HCT116 (cell line): ENCODE measurements at regions of chr5 and their contacts with region 1.

Region 1: GRCh38 chr5:168987543-168988300 is 313.2 kb downstream of the SLIT3 start:
- DNase-seq: peak; percentile 32
- ATAC-seq: peak; percentile 88
- H3K4me3 ChIP-seq: no peak overlapping the region
- H3K27ac ChIP-seq: no peak overlapping the region
- H3K4me1 ChIP-seq: no peaks in the 10 kb centered on the region
- H3K27me3 ChIP-seq: peaks cover 54% of the 10 kb centered on the region
- CTCF ChIP-seq: peak; percentile 79 to 92 (median 86)
- POLR2A ChIP-seq: no peak
- RAD21 ChIP-seq: peak; percentile 92

Region 2: DNA sequence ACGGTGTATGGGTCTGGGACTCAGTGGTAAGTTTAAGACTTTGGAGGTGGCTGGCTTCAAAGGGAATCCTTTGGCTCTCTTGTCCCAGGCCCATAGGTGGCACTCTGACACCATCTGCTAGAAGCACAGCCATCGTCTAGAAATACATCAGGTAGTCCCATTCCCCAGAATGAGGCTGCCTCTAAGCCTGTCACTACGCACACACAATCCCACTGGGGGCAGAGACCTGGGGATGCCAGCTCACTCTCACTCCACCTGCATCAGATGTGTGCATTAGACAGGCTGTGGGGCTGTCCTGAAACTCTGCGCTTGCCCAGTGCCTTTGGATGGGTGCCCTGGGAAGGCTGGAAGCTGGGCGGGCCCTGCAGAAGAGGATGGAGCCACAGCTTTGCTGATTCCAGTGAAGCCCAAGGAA is 281.1 kb before region 1 on chr5:
- CTCF ChIA-PET with region 1: interaction called, 4 read pairs
- POLR2A ChIA-PET with region 1: no interaction called
- RAD21 ChIA-PET with region 1: no interaction called
- intact Hi-C with region 1: loop called (anchors 2 kb)
- DNase-seq: peak; percentile 7
- ATAC-seq: peak; percentile 89
- H3K4me3 ChIP-seq: no peak overlapping the region
- H3K27ac ChIP-seq: no peak overlapping the region
- H3K4me1 ChIP-seq: no peaks in the 10 kb centered on the region
- H3K27me3 ChIP-seq: no peaks in the 10 kb centered on the region
- CTCF ChIP-seq: peak; percentile 45 to 71 (median 67); a peak in 5 of 6 replicates
- POLR2A ChIP-seq: no peak
- RAD21 ChIP-seq: peak; percentile 79

Region 3: DNA sequence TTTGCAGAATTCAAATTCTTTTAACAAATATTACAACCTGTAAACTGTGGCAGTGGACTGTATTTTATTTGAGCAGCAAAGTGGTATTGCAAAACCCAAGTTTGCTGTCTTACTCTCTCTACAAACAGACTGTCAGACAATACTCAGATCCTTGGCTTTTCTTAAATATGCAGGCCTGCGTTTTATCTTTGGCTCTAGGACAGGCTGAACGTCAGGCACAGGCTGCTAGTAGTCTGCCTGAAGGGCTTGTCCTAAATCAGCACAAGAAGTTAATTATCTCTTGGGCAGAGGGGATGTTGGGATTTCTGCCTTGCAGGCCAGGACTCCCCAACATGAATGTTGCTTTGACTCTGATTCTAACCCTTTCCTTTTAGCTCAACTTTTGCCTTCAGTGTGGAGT is 165.7 kb after region 1 on chr5:
- CTCF ChIA-PET with region 1: no interaction called
- POLR2A ChIA-PET with region 1: no interaction called
- RAD21 ChIA-PET with region 1: no interaction called
- intact Hi-C with region 1: loop called (anchors 10 kb)
- DNase-seq: no peak
- ATAC-seq: no peak
- H3K4me3 ChIP-seq: no peak overlapping the region
- H3K27ac ChIP-seq: no peak overlapping the region
- H3K4me1 ChIP-seq: no peaks in the 10 kb centered on the region
- H3K27me3 ChIP-seq: peaks cover 36% of the 10 kb centered on the region
- CTCF ChIP-seq: no peak
- POLR2A ChIP-seq: no peak
- RAD21 ChIP-seq: no peak

Region 4: DNA sequence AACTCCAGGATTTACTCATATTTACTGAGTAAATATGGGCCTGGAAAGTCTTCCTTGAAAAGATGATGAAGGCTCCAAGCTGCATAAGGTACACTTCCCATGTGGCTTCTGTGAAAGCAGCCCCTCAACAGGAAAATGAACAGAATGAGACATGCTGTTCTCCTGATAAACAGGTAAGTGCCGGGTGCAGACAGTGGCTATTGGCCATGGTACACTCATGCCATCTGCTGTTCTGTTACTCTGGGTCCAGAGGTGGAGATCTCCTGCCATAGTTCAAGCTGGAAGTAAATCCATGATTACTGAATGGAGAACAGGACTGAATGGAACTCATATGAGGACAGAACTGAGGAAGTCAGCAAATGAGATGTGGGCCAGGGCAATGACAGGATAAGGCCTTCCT is 209.6 kb after region 1 on chr5:
- CTCF ChIA-PET with region 1: interaction called, 6 read pairs
- POLR2A ChIA-PET with region 1: no interaction called
- RAD21 ChIA-PET with region 1: no interaction called
- intact Hi-C with region 1: loop called (anchors 5 kb)
- DNase-seq: no peak
- ATAC-seq: no peak
- H3K4me3 ChIP-seq: no peak overlapping the region
- H3K27ac ChIP-seq: no peak overlapping the region
- H3K4me1 ChIP-seq: no peaks in the 10 kb centered on the region
- H3K27me3 ChIP-seq: peaks cover 15% of the 10 kb centered on the region
- CTCF ChIP-seq: peak in 1 of 3 experiments; percentile 10; a peak in 1 of 6 replicates
- POLR2A ChIP-seq: no peak
- RAD21 ChIP-seq: peak; percentile 43; the same call in 1 of the 2 replicates

Region 5: DNA sequence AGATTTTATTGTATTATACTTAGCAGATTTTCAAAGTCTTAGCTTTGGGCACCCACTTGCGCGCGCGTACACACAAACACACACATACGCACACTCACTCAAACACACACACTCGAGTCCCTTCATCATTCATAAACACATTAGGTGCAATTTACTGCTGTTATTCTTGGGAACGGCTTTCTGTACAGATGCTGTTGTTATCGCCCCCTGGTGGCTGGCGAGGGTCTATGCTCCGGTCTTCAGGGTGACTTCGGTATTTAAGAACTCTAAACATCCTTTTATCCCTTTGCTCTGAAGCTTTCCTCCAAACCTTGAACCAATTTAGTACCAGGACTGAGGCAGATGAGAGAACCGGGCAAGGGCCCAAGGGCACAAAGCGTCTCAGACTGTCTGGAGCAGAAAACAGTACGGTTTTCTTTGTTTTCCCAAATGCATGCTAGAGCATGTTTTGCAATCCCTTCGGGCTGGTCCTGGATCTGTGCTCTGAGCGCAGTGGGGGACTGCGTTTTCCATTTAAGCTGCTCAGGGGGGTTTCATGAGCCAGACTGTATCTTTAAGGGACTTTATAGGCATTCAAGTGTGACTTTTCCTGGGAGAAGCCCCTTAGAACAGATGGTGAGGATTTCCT is 314.9 kb after region 1 on chr5:
- CTCF ChIA-PET with region 1: interaction called, 3 read pairs
- POLR2A ChIA-PET with region 1: no interaction called
- RAD21 ChIA-PET with region 1: no interaction called
- intact Hi-C with region 1: loop called (anchors 1 kb)
- DNase-seq: peak; percentile 48
- ATAC-seq: peak; percentile 89
- H3K4me3 ChIP-seq: no peak overlapping the region
- H3K27ac ChIP-seq: no peak overlapping the region
- H3K4me1 ChIP-seq: no peaks in the 10 kb centered on the region
- H3K27me3 ChIP-seq: peaks cover 16% of the 10 kb centered on the region; the same call in 1 of the 2 replicates
- CTCF ChIP-seq: peak; percentile 78 to 96 (median 87)
- POLR2A ChIP-seq: no peak
- RAD21 ChIP-seq: peak; percentile 74

Region 6: DNA sequence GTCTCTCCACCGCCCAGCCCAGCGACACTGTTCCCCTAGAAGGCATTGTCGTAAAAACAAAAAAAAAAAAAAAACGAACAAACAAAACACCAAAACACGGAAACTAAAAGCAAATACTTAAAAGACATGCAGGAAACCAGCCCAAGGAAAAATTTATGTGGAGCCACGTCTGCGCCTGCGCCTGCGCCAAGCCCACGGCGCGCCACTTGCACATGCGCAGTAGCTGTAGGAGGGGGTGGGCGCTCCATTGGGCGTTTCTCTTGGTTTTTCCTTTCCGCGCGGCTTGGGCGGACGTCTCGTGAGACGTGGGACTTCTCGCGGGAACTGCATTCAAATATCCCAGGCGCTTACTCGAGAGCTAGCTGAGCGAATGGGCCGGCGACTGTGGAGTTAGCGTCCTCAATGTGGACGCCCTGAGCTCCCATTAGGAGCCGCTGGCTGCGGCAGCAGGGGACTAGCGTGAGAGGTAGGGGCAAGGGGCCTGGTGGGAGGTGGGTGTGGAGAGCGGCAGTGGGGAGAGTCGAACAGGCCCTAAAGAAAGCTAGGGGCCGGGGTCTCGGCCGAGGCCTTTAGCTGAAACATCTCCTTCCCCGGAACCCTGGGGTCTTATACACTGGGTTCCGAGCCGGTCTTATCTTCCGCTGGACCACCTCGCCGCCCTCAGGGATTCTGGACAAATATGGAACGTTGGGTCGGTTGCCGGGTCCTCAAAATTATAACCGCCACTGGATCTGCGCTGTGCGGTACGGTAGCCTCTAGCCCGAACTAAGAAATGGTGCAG is 595.9 kb after region 1 on chr5 and contains the start of gene SPDL1:
- CTCF ChIA-PET with region 1: interaction called, 8 read pairs
- POLR2A ChIA-PET with region 1: no interaction called
- RAD21 ChIA-PET with region 1: no interaction called
- intact Hi-C with region 1: loop called (anchors 2 kb)
- DNase-seq: peak; percentile 93
- ATAC-seq: peak; percentile 95
- H3K4me3 ChIP-seq: peak within 1 kb of the TSS; percentile 84 to 86
- H3K27ac ChIP-seq: peak within 1 kb of the TSS; percentile 35
- H3K4me1 ChIP-seq: peaks cover 0 to 16% of the 10 kb centered on the region in 2 experiments; a peak in 1 of 4 replicates
- H3K27me3 ChIP-seq: peaks cover 10% of the 10 kb centered on the region
- CTCF ChIP-seq: no peak
- POLR2A ChIP-seq: peak; percentile 92
- RAD21 ChIP-seq: no peak
- total RNA-seq, gene SPDL1: 28.5 TPM

Region 7: DNA sequence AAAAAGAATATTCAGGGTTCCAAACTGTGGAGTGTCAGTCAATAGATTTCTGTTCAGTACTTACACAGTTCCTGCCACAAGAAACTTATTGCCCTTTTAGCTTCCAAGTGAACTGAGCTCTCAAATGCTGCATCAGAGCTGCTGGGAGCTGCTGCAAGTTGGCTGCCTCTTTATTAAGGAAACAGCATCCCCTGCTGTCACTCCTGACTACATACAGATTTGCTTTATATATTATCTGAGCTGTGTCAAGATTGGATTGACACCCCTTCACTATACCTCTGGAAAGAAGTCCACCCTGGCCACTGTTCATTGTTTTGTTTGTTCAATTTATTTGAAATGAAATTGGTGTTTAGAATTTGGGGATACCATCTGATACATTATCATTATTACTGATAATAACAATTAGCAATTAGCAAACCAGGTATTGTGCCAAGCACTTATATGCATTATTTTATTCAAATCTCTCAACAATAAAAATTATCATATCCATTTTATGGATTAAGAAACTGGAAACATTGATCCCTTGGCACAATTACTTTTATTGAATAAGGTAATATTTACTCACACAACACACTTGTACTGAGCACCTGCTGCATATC is 1228.6 kb after region 1 on chr5:
- CTCF ChIA-PET with region 1: interaction called, 4 read pairs
- POLR2A ChIA-PET with region 1: no interaction called
- RAD21 ChIA-PET with region 1: no interaction called
- intact Hi-C with region 1: loop called (anchors 10 kb)
- DNase-seq: peak; percentile 35
- ATAC-seq: peak; percentile 71
- H3K4me3 ChIP-seq: no peak overlapping the region
- H3K27ac ChIP-seq: no peak overlapping the region
- H3K4me1 ChIP-seq: peaks cover 2 to 18% of the 10 kb centered on the region in 2 experiments; a peak in 2 of 4 replicates
- H3K27me3 ChIP-seq: no peaks in the 10 kb centered on the region; the same call in 1 of the 2 replicates
- CTCF ChIP-seq: peak; percentile 44 to 69 (median 66); a peak in 5 of 6 replicates
- POLR2A ChIP-seq: no peak
- RAD21 ChIP-seq: peak; percentile 87